Cardiac septum (tissue), 1 donor: ENCODE measurements at regions of chr1 and their contacts with region 1.

Region 1: DNA sequence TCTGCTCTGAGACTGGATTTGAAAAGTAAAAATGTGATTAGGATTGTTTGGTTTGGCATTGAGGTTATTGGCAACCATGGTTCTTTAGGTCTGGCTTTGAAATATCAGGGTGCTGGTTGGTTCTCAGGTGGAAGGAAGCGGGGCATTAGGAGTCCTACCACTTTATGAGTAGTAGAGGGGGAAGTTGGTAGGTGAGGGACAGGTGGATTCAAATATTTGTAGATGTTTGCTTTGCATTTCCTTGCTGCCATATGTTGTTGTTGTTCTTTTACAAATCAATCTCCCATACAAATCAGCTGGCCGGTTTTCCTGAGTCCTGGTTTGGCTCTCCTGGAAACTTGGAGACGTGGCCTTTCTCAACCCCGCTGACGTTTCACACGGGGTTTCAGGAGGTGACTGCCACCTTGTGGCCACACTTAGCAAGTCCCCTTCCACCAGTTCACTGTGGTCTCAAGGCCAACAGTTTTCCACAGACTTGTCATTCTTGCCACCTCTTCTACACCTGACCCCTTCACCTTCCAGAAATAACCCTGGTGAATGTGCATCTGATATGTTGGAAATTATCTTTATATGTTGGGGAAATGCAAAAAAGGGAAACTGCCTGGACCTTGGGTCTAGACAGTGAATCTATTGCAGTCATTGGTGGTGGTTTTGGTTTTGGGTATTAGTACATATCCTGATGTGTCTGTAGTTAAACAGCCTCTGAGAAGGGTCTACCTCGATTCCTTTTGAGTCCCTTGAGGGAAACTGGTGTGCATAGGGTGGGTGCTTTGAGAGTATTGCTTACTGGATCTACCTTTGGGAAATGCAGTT is 127.0 kb upstream of the KIAA0040 start:
- DNase-seq: peak; percentile 89

Region 2: GRCh38 chr1:175035865-175036264 is 283.8 kb before region 1 on chr1:
- intact Hi-C with region 1: loop called (anchors 5 kb)
- DNase-seq: no peak

Region 3: DNA sequence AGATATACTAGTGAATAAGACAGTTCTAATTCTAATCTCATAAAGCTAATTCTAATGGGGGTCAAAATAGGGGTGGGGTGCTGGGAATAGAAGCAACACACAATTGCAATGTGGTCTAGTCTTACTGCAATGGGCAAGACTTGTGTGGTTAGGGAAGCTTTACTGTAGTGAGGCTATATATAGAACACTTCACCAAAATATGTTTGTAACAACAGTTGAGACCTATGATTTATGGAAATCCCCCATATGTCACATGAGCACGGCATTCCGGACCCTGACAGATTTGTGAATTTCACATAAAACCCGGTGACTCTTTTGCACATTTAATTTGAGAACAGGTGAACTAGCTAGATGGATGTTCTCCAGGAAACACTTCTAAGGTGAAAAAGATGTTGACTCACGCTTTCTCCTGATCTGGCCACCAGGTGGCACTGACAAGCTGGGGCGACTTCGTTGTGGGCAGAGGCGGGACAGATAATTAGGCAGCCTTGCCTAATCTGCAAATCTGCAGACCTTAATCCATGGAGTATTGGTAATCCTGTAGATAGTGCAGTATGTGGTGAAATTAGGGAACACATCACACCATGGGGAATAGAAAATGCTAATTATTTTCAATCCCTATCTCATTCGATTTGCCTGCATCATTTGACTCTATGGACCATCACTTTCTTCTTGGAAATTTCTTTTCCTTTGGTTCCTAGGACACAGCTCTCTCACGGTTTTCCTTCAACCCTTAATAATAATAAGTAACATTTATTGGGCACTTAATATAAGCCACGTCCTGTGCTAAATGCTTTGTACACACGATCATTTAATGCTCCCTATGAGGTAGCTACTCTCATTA is 164.8 kb before region 1 on chr1:
- intact Hi-C with region 1: loop called (anchors 1 kb)
- DNase-seq: peak; percentile 86

Region 4: DNA sequence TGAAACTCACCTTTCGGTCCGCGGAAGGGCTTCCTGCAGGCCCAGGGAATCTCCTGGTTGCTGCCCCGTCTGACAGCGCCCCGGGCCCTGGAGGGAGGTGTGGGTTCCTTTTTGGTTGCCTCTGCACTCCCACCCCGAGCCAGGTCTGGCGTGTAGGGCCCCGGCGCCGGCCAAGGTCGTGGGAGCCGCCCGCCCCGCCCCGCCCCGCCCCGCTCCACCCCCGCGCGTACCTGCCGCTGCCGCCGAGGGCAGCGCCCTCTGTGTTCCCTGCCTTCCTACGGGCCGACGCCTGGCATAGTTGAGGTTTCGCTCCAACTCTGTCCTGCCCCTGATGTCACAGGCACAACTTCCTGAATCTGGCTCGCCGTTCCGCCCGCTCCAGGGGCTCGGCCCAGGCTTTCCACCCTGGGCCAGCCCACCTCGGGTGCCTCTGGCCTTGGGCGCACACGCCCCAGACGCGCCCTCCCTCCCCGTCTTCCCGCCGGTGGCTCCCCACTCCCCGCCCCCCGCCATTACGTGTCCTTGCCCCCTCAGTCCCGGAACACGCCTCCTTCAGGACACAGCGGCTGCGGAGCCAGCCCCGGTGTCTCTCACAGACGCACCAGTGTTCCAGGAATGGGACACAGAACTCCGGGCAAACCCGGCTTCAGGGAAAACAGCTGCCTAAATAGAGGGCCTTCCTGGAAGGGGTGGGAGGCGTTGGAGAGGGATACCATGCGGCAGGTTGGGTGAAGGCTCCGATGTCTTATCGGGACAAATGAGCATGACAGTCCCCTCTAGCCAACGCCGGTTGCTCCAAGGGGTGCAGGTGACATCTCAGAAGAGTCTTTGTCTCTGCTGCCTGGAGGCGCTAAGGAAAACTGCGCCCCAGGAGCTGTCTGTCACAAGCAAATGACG is 126.7 kb before region 1 on chr1 and contains the start of gene KIAA0040:
- intact Hi-C with region 1: loop called (anchors 1 kb)
- DNase-seq: peak; percentile 91
- total RNA-seq, gene KIAA0040: 9.7 TPM

Region 5: GRCh38 chr1:175287377-175287776 is 32.2 kb before region 1 on chr1:
- intact Hi-C with region 1: no loop called
- DNase-seq: no peak